AG04450 (cell line): ENCODE measurements at regions of chr3 and their contacts with region 1.

Region 1: DNA sequence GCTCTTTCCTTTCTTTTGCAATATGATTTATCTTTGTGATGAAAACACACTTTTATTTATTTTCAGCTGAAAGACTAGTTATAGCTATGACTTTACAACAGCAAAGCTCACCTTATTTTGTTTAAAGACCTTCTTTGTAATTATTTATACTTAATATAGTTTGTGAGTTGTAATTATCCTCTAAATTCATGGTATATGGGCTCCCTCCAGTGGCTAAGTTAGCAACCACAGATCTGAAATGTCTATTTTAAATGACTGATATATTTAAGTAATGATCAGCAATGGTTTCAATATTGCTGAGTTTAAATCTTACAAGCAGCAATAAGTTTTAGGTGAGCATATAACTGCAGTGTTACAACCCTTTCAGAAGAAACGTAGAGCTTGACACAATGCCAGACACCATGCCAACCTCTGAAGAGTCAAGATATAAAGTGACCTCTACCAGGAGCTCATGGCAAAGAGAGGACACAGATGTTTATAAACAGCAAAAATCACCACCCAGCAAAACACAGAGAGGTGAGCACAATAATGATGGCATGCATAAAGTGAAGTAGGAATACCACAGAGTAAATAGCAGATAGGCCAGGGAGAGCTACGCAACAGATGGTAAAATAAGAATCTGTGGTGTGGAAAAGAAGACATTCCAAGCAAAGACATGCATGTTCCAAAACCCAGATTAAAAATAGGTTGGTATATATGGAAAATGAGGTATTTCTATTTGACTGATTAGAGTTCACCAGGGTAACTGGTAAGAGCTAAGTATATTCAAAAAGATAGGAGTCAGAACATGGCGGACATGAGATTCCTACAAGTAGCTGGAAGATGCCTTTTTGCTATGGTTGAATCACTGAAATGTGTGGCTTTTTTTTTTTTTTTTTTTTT is 143.7 kb upstream of the ZNF385D start:
- DNase-seq: no peak
- H3K4me3 ChIP-seq: no peak overlapping the region
- H3K27ac ChIP-seq: no peak overlapping the region
- H3K27me3 ChIP-seq: no peaks in the 10 kb centered on the region
- CTCF ChIP-seq: peak; percentile 63

Region 2: GRCh38 chr3:20340324-20340928 is 1554.3 kb before region 1 on chr3:
- CTCF ChIA-PET with region 1: interaction called, 10 read pairs
- POLR2A ChIA-PET with region 1: no interaction called
- DNase-seq: peak; percentile 30
- H3K4me3 ChIP-seq: no peak overlapping the region
- H3K27ac ChIP-seq: no peak overlapping the region
- H3K27me3 ChIP-seq: no peaks in the 10 kb centered on the region
- CTCF ChIP-seq: peak; percentile 90

Region 3: GRCh38 chr3:20511863-20512505 is 1382.7 kb before region 1 on chr3:
- CTCF ChIA-PET with region 1: interaction called, 25 read pairs
- POLR2A ChIA-PET with region 1: no interaction called
- DNase-seq: peak; percentile 3
- H3K4me3 ChIP-seq: no peak overlapping the region
- H3K27ac ChIP-seq: no peak overlapping the region
- H3K27me3 ChIP-seq: no peaks in the 10 kb centered on the region
- CTCF ChIP-seq: peak; percentile 71

Region 4: GRCh38 chr3:21551019-21551418 is 343.7 kb before region 1 on chr3:
- CTCF ChIA-PET with region 1: no interaction called
- POLR2A ChIA-PET with region 1: no interaction called
- DNase-seq: no peak
- H3K4me3 ChIP-seq: no peak overlapping the region
- H3K27ac ChIP-seq: no peak overlapping the region
- H3K27me3 ChIP-seq: no peaks in the 10 kb centered on the region
- CTCF ChIP-seq: no peak

Region 5: GRCh38 chr3:21879184-21879886 is 15.4 kb before region 1 on chr3:
- CTCF ChIA-PET with region 1: interaction called, 15 read pairs
- POLR2A ChIA-PET with region 1: no interaction called
- DNase-seq: no peak
- H3K4me3 ChIP-seq: no peak overlapping the region
- H3K27ac ChIP-seq: no peak overlapping the region
- H3K27me3 ChIP-seq: no peaks in the 10 kb centered on the region
- CTCF ChIP-seq: no peak

Region 6: DNA sequence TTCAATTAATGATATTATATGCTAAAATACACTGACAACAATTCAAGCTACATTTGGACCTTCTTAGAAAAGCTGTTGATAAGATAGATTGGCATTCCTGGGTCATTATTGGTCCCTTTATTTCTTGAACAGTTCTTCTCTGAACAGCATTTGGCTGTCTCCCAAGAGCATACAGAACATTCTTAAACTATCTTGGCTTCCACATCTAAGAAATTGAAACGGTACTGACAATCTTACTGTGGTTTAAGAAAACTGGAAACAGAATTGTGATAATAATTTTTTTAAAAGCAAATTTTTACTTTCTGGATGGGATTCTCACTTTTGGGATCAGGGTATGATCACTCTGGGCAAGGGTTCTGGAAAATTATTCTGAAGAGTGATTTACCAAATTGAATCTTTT is 18.0 kb after region 1 on chr3:
- CTCF ChIA-PET with region 1: interaction called, 10 read pairs
- POLR2A ChIA-PET with region 1: no interaction called
- DNase-seq: no peak
- H3K4me3 ChIP-seq: no peak overlapping the region
- H3K27ac ChIP-seq: no peak overlapping the region
- H3K27me3 ChIP-seq: no peaks in the 10 kb centered on the region
- CTCF ChIP-seq: no peak